Naive thymus-derived CD4-positive, alpha-beta T cell (primary cell): ENCODE measurements at regions of chr5 and their contacts with region 1.

Region 1: GRCh38 chr5:5492087-5492933 is 69.8 kb downstream of the ICE1 start:
- DNase-seq: peak in 7 of 9 donors; percentile 40 to 67 (median 62)
- ATAC-seq: peak; percentile 57
- H3K4me3 ChIP-seq: no peak overlapping the region
- H3K4me3 Mint-ChIP-seq: peak overlapping the region; percentile 60 to 77 (median 68)
- H3K27ac ChIP-seq: no peak overlapping the region
- H3K27ac Mint-ChIP-seq: peak overlapping the region in 6 of 9 donors; percentile 6 to 56 (median 38)
- H3K4me1 ChIP-seq: peaks cover 0 to 7% of the 10 kb centered on the region in 2 donors
- H3K4me1 Mint-ChIP-seq: peaks cover 5 to 43% (median 32%) of the 10 kb centered on the region in 7 donors
- H3K27me3 ChIP-seq: no peaks in the 10 kb centered on the region
- H3K27me3 Mint-ChIP-seq: peaks cover 0 to 20% (median 0%) of the 10 kb centered on the region in 5 donors

Region 2: GRCh38 chr5:5421961-5422818 is 70.1 kb before region 1 on chr5 and contains the start of gene ICE1:
- CTCF ChIA-PET with region 1: no interaction called
- POLR2A ChIA-PET with region 1: interaction called, 3 read pairs
- intact Hi-C with region 1: loop called (anchors 1 kb)
- DNase-seq: peak; percentile 89 to 99 (median 96)
- ATAC-seq: peak; percentile 93
- H3K4me3 ChIP-seq: peak within 1 kb of the TSS; percentile 84
- H3K4me3 Mint-ChIP-seq: peak within 1 kb of the TSS in 7 of 10 donors; percentile 88 to 96 (median 93)
- H3K27ac ChIP-seq: peak within 1 kb of the TSS; percentile 90
- H3K27ac Mint-ChIP-seq: peak within 1 kb of the TSS in 7 of 9 donors; percentile 92 to 99 (median 97)
- H3K4me1 ChIP-seq: peaks cover 33 to 35% of the 10 kb centered on the region in 2 donors
- H3K4me1 Mint-ChIP-seq: peaks cover 6 to 24% (median 16%) of the 10 kb centered on the region in 7 donors
- H3K27me3 ChIP-seq: no peaks in the 10 kb centered on the region
- H3K27me3 Mint-ChIP-seq: no peaks in the 10 kb centered on the region
- total RNA-seq, gene ICE1: 30.2 to 47.6 (median 35.8) TPM

Region 3: DNA sequence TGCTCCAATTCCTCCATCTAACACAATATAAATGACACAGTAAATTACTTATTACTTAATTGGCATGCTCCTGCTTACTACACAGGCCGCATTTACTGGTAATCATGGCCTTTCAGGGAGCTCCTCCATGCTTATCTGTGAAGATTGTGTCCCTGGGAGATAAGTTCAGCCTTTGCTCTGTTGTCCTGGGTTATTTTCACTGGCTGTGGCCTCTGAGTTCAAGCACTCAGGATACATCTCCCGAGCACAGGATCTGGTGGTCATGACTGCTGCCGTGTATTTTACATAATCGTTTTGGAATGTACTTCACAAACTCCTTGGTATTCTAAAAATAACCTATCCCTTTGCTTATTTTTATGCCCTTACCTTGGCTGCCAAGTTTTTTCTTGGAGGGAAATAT is 145.9 kb after region 1 on chr5:
- CTCF ChIA-PET with region 1: no interaction called
- POLR2A ChIA-PET with region 1: no interaction called
- intact Hi-C with region 1: no loop called
- DNase-seq: no peak
- ATAC-seq: no peak
- H3K4me3 ChIP-seq: no peak overlapping the region
- H3K4me3 Mint-ChIP-seq: no peak overlapping the region
- H3K27ac ChIP-seq: no peak overlapping the region
- H3K27ac Mint-ChIP-seq: no peak overlapping the region
- H3K4me1 ChIP-seq: no peaks in the 10 kb centered on the region
- H3K4me1 Mint-ChIP-seq: no peaks in the 10 kb centered on the region
- H3K27me3 ChIP-seq: no peaks in the 10 kb centered on the region
- H3K27me3 Mint-ChIP-seq: peaks cover 4 to 45% (median 16%) of the 10 kb centered on the region in 5 donors

Region 4: GRCh38 chr5:5658226-5658625 is 165.9 kb after region 1 on chr5:
- CTCF ChIA-PET with region 1: no interaction called
- POLR2A ChIA-PET with region 1: no interaction called
- intact Hi-C with region 1: no loop called
- DNase-seq: no peak
- ATAC-seq: no peak
- H3K4me3 ChIP-seq: no peak overlapping the region
- H3K4me3 Mint-ChIP-seq: no peak overlapping the region
- H3K27ac ChIP-seq: no peak overlapping the region
- H3K27ac Mint-ChIP-seq: no peak overlapping the region
- H3K4me1 ChIP-seq: no peaks in the 10 kb centered on the region
- H3K4me1 Mint-ChIP-seq: no peaks in the 10 kb centered on the region
- H3K27me3 ChIP-seq: no peaks in the 10 kb centered on the region
- H3K27me3 Mint-ChIP-seq: peaks cover 2 to 46% (median 23%) of the 10 kb centered on the region in 5 donors

Region 5: GRCh38 chr5:5886812-5887486 is 394.6 kb after region 1 on chr5:
- CTCF ChIA-PET with region 1: no interaction called
- POLR2A ChIA-PET with region 1: no interaction called
- intact Hi-C with region 1: loop called in 1 of 2 experiments (anchors 2 kb)
- DNase-seq: peak in 7 of 9 donors; percentile 5 to 67 (median 17)
- ATAC-seq: peak; percentile 61
- H3K4me3 ChIP-seq: no peak overlapping the region
- H3K4me3 Mint-ChIP-seq: no peak overlapping the region
- H3K27ac ChIP-seq: no peak overlapping the region
- H3K27ac Mint-ChIP-seq: no peak overlapping the region
- H3K4me1 ChIP-seq: no peaks in the 10 kb centered on the region
- H3K4me1 Mint-ChIP-seq: peaks cover 0 to 5% (median 0%) of the 10 kb centered on the region in 7 donors
- H3K27me3 ChIP-seq: no peaks in the 10 kb centered on the region
- H3K27me3 Mint-ChIP-seq: peaks cover 3 to 46% (median 27%) of the 10 kb centered on the region in 5 donors

Region 6: DNA sequence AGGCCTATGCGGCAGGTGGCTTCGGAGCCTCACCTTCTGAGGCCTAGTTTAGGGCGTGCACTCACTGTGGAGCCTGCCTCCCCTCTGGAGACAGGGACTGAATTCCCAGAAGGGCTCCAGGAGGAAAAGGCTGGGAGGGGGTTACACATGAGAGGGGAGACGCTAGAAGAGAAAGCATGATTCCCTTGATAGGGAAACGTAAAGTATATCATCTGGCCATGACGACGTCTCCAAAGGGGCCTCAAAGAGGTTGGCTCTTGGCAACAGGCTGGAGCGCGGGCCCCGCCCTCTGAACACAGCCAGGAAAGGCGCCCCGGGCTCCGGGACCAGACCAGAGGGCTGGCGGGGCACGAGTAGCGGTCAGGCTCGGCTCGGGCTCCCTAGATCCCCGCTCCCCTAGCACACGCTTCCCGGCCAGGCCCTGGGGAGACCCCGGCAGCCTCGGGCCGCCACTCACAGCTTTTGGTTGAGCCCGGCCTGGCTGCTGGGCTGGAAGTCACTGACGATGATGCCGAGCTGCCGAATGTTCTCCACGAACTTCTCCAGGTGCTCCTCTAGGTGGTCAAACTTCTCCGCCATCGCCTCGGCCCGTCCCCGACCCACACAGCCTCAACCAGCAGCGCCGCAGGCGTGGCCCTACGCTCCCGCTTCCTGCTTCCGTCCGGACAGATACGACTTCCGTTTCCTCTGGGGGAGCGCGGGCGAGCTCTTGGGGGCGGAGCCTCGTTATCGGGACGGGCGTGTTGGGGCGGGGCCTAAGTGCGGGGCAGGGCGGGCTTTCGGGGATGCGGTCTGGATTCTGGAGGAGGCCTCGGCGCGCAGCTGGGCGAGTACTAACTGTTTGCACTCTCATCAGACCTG is 885.8 kb after region 1 on chr5 and contains the start of gene MED10:
- CTCF ChIA-PET with region 1: interaction called, 3 read pairs
- POLR2A ChIA-PET with region 1: no interaction called
- intact Hi-C with region 1: loop called (anchors 1 to 2 kb)
- DNase-seq: peak; percentile 85 to 96 (median 93)
- ATAC-seq: peak; percentile 99
- H3K4me3 ChIP-seq: peak within 1 kb of the TSS; percentile 92
- H3K4me3 Mint-ChIP-seq: peak within 1 kb of the TSS; percentile 89 to 100 (median 98)
- H3K27ac ChIP-seq: peak within 1 kb of the TSS; percentile 94
- H3K27ac Mint-ChIP-seq: peak within 1 kb of the TSS; percentile 95 to 99 (median 96)
- H3K4me1 ChIP-seq: peaks cover 23 to 24% of the 10 kb centered on the region in 2 donors
- H3K4me1 Mint-ChIP-seq: peaks cover 30 to 64% (median 55%) of the 10 kb centered on the region in 7 donors
- H3K27me3 ChIP-seq: no peaks in the 10 kb centered on the region
- H3K27me3 Mint-ChIP-seq: peaks cover 0 to 4% (median 0%) of the 10 kb centered on the region in 5 donors
- total RNA-seq, gene MED10: 46.0 to 79.7 (median 61.2) TPM

Region 7: DNA sequence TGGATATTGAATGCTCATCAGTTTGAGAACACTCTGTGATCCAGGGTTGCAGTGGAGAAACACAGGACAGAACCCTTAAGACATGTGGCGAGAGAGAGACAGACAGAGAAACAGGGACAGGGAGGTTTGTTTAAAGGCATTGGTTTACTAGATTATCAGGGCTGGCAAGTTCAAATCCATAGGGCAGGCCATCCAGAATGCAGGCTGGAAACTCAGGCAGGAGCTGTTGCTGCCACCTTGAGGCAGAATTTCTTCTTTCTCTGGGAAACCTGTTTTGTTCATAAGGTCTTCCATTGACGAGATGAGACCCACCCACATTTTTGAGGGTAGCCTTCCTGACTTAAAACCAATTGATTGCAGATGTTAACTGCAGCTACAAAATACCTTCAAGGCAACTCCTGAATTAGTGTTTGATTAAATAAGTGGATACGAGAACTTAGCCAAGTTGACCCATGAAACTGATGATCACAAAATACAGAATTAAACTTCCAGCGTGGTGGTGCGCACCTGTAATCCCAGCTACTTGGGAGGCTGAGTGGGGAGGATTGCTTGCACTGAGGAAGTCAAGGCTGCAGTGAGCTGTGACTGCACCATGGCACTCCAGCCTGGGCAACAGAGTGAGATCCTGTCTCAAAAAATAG is 1084.7 kb after region 1 on chr5:
- CTCF ChIA-PET with region 1: no interaction called
- POLR2A ChIA-PET with region 1: no interaction called
- intact Hi-C with region 1: loop called in 1 of 2 experiments (anchors 1 kb)
- DNase-seq: peak in 2 of 9 donors; percentile 10 to 25
- ATAC-seq: no peak
- H3K4me3 ChIP-seq: no peak overlapping the region
- H3K4me3 Mint-ChIP-seq: no peak overlapping the region
- H3K27ac ChIP-seq: no peak overlapping the region
- H3K27ac Mint-ChIP-seq: no peak overlapping the region
- H3K4me1 ChIP-seq: no peaks in the 10 kb centered on the region
- H3K4me1 Mint-ChIP-seq: no peaks in the 10 kb centered on the region
- H3K27me3 ChIP-seq: no peaks in the 10 kb centered on the region
- H3K27me3 Mint-ChIP-seq: peaks cover 22 to 48% (median 39%) of the 10 kb centered on the region in 5 donors

Region 8: GRCh38 chr5:6712577-6713275 is 1220.4 kb after region 1 on chr5:
- CTCF ChIA-PET with region 1: no interaction called
- POLR2A ChIA-PET with region 1: no interaction called
- intact Hi-C with region 1: loop called (anchors 1 to 10 kb)
- DNase-seq: peak; percentile 94 to 99 (median 98)
- ATAC-seq: peak; percentile 87
- H3K4me3 ChIP-seq: peak overlapping the region; percentile 95
- H3K4me3 Mint-ChIP-seq: peak overlapping the region; percentile 80 to 92 (median 89)
- H3K27ac ChIP-seq: peak overlapping the region; percentile 95
- H3K27ac Mint-ChIP-seq: peak overlapping the region; percentile 77 to 94 (median 92)
- H3K4me1 ChIP-seq: peaks cover 21 to 24% of the 10 kb centered on the region in 2 donors
- H3K4me1 Mint-ChIP-seq: peaks cover 26 to 44% (median 33%) of the 10 kb centered on the region in 7 donors
- H3K27me3 ChIP-seq: no peaks in the 10 kb centered on the region
- H3K27me3 Mint-ChIP-seq: peaks cover 0 to 4% (median 0%) of the 10 kb centered on the region in 5 donors

Region 9: GRCh38 chr5:6820851-6821479 is 1328.7 kb after region 1 on chr5:
- CTCF ChIA-PET with region 1: no interaction called
- POLR2A ChIA-PET with region 1: no interaction called
- intact Hi-C with region 1: loop called in 1 of 2 experiments (anchors 10 kb)
- DNase-seq: peak in 6 of 9 donors; percentile 16 to 64 (median 30)
- ATAC-seq: peak; percentile 75
- H3K4me3 ChIP-seq: no peak overlapping the region
- H3K4me3 Mint-ChIP-seq: no peak overlapping the region
- H3K27ac ChIP-seq: no peak overlapping the region
- H3K27ac Mint-ChIP-seq: no peak overlapping the region
- H3K4me1 ChIP-seq: no peaks in the 10 kb centered on the region
- H3K4me1 Mint-ChIP-seq: peaks cover 0 to 9% (median 0%) of the 10 kb centered on the region in 7 donors
- H3K27me3 ChIP-seq: peaks cover 0 to 7% of the 10 kb centered on the region in 2 donors
- H3K27me3 Mint-ChIP-seq: peaks cover 11 to 34% (median 27%) of the 10 kb centered on the region in 5 donors